OCI-LY7 (cell line): ENCODE measurements at regions of chr4 and their contacts with region 1.

Region 1: DNA sequence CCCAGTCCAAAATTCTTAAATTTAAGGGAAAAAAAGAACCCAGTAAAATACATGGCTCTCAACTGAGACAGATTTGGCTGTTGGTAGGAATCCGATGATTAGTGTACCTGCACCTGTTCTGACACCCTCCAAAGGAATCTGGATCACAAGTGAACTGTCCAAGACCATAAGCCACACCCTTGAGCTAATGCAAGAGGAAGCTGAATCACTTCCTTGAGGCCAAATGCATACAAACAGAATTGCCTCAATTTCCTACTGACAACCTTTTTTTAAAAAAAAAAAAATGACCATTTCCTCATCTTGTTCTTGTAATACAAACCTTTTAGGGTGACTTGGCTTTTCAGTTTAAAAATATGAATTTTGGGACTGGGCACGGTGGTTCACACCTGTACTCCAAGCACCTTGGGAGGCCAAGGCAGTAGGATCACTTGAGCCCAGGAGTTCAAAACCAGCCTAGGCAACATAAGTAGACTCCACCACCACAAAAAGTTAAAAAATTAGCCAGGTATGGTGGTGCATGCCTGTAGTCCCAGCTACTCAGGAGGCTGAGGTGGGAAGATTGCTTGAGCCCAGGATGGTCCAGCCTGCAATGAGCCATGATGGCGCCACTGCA is 10.7 kb upstream of the FBXL5 start:
- DNase-seq: no peak
- H3K4me3 ChIP-seq: no peak overlapping the region
- H3K27ac ChIP-seq: no peak overlapping the region
- H3K4me1 ChIP-seq: peaks cover 15% of the 10 kb centered on the region
- CTCF ChIP-seq: no peak

Region 2: GRCh38 chr4:15655229-15656037 is 10.4 kb before region 1 on chr4 and contains the start of gene FBXL5:
- CTCF ChIA-PET with region 1: no interaction called
- POLR2A ChIA-PET with region 1: interaction called, 67 read pairs
- intact Hi-C with region 1: no loop called
- DNase-seq: peak; percentile 92
- H3K4me3 ChIP-seq: peak within 1 kb of the TSS; percentile 92
- H3K27ac ChIP-seq: peak within 1 kb of the TSS; percentile 68
- H3K4me1 ChIP-seq: peaks cover 48% of the 10 kb centered on the region
- CTCF ChIP-seq: no peak
- total RNA-seq, gene FBXL5: 73.9 and 102 TPM in 2 replicates

Region 3: DNA sequence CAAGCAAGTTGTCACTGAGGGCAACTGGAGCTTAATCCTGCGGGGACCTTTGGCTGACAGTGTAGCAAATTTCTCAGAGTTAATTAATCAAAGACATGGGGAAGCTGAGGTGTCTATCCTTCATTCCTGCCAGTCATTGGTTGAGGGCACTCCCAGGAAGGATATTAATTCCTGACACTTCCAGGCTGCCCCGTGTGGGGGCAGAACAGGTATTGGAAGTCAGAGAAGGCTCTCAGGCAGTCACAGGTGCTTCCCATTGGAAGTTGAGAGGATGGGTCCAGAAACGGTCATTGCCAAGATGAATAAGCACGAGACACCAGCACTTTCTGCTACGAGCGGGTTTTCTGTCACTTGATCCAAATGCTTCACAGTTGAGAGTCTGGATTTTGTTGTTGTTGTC is 83.1 kb after region 1 on chr4:
- CTCF ChIA-PET with region 1: no interaction called
- POLR2A ChIA-PET with region 1: no interaction called
- intact Hi-C with region 1: no loop called
- DNase-seq: no peak
- H3K4me3 ChIP-seq: no peak overlapping the region
- H3K27ac ChIP-seq: no peak overlapping the region
- H3K4me1 ChIP-seq: peaks cover 3% of the 10 kb centered on the region
- CTCF ChIP-seq: no peak

Region 4: GRCh38 chr4:15786743-15787142 is 120.9 kb after region 1 on chr4:
- CTCF ChIA-PET with region 1: no interaction called
- POLR2A ChIA-PET with region 1: no interaction called
- intact Hi-C with region 1: no loop called
- DNase-seq: no peak
- H3K4me3 ChIP-seq: no peak overlapping the region
- H3K27ac ChIP-seq: no peak overlapping the region
- H3K4me1 ChIP-seq: peaks cover 46% of the 10 kb centered on the region
- CTCF ChIP-seq: no peak